HepG2 (cell line): ENCODE measurements at regions of chr2 and their contacts with region 1.

Region 1: DNA sequence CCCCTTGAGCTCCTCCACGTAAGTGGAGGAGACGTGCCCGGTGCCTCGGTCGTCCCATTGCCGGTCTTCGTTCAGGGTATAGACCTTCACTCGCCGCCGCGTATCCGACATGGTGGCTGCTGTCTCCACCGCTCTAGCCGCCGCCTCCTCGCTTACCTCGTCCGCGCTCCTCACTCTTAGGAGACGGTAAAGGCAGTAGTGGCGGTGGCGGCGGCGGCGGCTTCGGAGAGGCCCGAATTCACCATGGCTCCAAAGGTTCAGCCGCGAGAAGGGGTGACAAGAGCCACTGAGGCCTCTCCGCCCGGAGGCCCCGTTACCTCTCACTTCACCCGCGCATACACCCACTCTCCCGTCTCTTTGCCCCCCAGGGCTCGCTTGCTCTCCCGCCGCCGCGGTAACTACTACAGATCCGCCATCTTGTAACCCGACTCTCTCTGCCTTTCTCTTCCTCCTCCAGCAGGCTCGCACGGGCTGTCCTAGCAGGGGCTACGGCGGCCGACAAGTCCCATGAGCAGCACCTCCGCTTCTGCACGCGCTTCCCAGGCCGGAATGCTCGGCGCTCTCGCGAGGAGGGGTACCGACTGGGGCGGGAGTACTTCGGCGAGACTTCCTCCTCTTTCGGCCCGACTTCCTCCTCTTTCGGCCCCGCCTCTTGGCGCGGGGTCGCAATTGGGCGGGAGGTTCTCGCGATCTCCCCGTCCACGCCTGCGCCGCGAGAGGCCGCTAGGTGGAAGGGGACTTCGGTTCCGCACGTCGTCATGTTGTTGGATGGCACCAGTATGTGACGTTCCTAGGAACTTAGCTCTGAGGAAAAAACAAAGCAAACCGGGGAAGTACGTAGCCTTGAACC is at the start of gene PPP4R3B:
- DNase-seq: peak; percentile 99
- ATAC-seq: peak; percentile 89
- H3K4me3 ChIP-seq: peak within 1 kb of the TSS; percentile 90 to 99 (median 93)
- H3K27ac ChIP-seq: peak within 1 kb of the TSS; percentile 95
- H3K4me1 ChIP-seq: peaks cover 42% of the 10 kb centered on the region
- H3K27me3 ChIP-seq: peaks cover 0 to 5% of the 10 kb centered on the region in 2 experiments; a peak in 1 of 5 replicates
- CTCF ChIP-seq: peak; percentile 70
- EP300 ChIP-seq: peak in 1 of 2 experiments; percentile 73; a peak in 2 of 4 replicates
- POLR2A ChIP-seq: peak; percentile 92 to 98
- RAD21 ChIP-seq: peak; percentile 39; the same call in 1 of the 2 replicates
- total RNA-seq, gene PPP4R3B: 53.0 and 86.9 TPM in 2 replicates

Region 2: DNA sequence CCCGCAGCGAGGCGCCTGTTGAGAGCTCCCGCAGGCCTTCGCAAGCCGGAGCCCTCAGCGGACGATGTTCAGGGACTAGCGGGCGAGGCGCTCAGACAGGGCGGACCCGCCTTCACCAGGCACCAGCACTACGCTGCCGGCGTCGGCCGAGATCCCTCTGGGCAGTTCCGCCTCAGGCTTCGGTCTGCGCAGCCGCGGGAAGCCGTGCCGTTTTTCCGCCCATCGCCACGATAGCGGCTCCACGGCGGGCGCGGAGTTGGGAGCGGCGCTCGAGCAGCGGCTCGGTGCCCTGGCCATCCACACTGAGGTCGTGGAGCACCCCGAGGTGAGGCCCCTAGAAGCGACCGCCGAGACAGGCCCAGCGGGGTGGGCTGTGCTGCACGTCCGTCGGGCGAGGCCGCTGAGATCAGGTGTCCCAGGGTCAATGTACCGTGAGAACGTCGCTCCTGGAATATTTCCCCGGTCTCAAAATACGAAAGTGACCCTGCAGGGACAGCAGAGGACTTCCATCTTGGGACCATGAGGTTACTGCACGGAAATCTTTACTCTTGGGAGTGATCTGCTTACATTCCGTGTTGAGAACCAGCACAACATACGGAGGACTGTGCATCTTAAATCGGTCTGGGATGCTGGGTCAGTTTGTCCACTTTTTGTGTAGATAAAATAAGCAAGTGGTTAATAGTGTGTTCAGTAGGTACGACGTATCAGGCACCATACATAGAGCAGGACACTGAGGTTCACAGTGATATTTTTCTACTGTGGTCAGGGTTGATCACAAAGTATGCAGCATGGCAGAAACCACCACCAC is 335.1 kb before region 1 on chr2:
- CTCF ChIA-PET with region 1: no interaction called
- POLR2A ChIA-PET with region 1: no interaction called
- in situ Hi-C with region 1: no loop called
- intact Hi-C with region 1: no loop called
- DNase-seq: peak; percentile 79
- ATAC-seq: peak; percentile 98
- H3K4me3 ChIP-seq: peak overlapping the region; percentile 69 to 82 (median 81)
- H3K27ac ChIP-seq: peak overlapping the region; percentile 89
- H3K4me1 ChIP-seq: peaks cover 70% of the 10 kb centered on the region
- H3K27me3 ChIP-seq: no peaks in the 10 kb centered on the region; a peak in 1 of 5 replicates
- CTCF ChIP-seq: peak; percentile 40
- EP300 ChIP-seq: no peak
- POLR2A ChIP-seq: peak; percentile 92
- RAD21 ChIP-seq: peak; percentile 70

Region 3: DNA sequence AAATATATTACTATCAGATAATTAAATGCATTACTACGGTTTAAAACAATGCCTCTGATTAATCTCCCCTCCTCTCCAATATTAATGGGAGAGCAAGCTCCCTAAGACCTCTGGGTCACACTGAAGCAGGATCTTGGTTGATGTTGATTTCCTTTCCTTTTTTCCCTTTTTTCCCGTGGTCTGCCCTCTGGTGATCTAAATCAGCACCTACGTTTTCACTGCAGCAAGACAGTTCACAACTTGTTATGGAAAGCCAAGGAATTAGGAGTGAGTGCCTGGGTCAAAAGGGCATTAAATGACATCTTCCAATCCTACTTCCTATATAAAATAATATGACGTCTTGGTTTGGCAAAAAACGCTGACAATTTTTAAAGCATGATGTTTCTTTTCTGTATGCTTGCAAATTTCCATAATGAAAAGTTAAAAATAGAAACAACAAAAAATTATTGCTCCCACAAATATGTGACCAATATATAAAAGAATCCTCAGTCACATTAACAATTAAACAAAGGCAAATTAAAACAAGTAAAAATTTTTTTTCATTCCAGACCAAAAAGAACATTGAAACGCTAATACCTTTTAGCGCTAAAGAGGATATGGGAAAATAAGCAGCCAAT is 105.8 kb before region 1 on chr2:
- CTCF ChIA-PET with region 1: no interaction called
- POLR2A ChIA-PET with region 1: no interaction called
- in situ Hi-C with region 1: no loop called
- intact Hi-C with region 1: no loop called
- DNase-seq: peak; percentile 58
- ATAC-seq: peak; percentile 85
- H3K4me3 ChIP-seq: no peak overlapping the region
- H3K27ac ChIP-seq: no peak overlapping the region
- H3K4me1 ChIP-seq: no peaks in the 10 kb centered on the region
- H3K27me3 ChIP-seq: no peaks in the 10 kb centered on the region
- CTCF ChIP-seq: peak; percentile 77
- EP300 ChIP-seq: no peak
- POLR2A ChIP-seq: no peak
- RAD21 ChIP-seq: no peak; the same call in 1 of the 2 replicates

Region 4: GRCh38 chr2:55581435-55581834 is 36.0 kb before region 1 on chr2:
- CTCF ChIA-PET with region 1: no interaction called
- POLR2A ChIA-PET with region 1: no interaction called
- in situ Hi-C with region 1: no loop called
- intact Hi-C with region 1: no loop called
- DNase-seq: peak; percentile 27
- ATAC-seq: no peak
- H3K4me3 ChIP-seq: no peak overlapping the region
- H3K27ac ChIP-seq: no peak overlapping the region
- H3K4me1 ChIP-seq: no peaks in the 10 kb centered on the region
- H3K27me3 ChIP-seq: no peaks in the 10 kb centered on the region
- CTCF ChIP-seq: peak; percentile 38
- EP300 ChIP-seq: no peak
- POLR2A ChIP-seq: no peak
- RAD21 ChIP-seq: no peak

Region 5: DNA sequence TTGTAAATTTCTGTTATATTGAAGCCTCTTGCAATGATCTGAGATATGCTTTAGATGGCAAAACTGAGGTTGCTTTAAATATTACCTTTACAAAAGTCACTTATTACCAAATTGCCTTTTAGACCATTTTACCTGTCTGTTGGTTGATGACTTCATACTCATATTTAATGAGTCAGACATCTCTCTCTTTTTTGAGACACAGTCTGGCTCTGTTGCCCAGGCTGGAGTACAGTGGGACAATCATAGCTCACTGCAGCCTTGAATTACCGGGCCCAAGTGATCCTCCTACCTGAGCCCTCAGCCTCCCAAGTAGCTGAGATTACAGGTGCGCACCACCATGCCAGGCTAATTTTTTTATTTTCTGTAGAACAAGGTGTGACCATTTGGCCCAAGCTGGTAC is 11.5 kb after region 1 on chr2:
- CTCF ChIA-PET with region 1: no interaction called
- POLR2A ChIA-PET with region 1: interaction called, 17 read pairs
- in situ Hi-C with region 1: no loop called
- intact Hi-C with region 1: no loop called
- DNase-seq: no peak
- ATAC-seq: no peak
- H3K4me3 ChIP-seq: no peak overlapping the region
- H3K27ac ChIP-seq: no peak overlapping the region
- H3K4me1 ChIP-seq: no peaks in the 10 kb centered on the region
- H3K27me3 ChIP-seq: no peaks in the 10 kb centered on the region
- CTCF ChIP-seq: no peak
- EP300 ChIP-seq: no peak
- POLR2A ChIP-seq: no peak
- RAD21 ChIP-seq: no peak